ENCODE measurements at regions of chr14 and their contacts with region 1.

Region 1: GRCh38 chr14:89973234-89973823 is 17.6 kb downstream of the TDP1 start:
- DNase-seq: peak; percentile 71 to 74
- ATAC-seq: peak; percentile 98 to 99
- H3K4me3 ChIP-seq: no peak overlapping the region
- H3K27ac ChIP-seq: no peak overlapping the region
- H3K4me1 ChIP-seq: no peaks in the 10 kb centered on the region
- CTCF ChIP-seq: peak; percentile 81
- EP300 ChIP-seq: no peak
- POLR2A ChIP-seq: no peak
- RAD21 ChIP-seq: peak; percentile 64 to 68

Region 2: GRCh38 chr14:89794096-89794495 is 179.2 kb before region 1 on chr14:
- CTCF ChIA-PET with region 1: no interaction called
- POLR2A ChIA-PET with region 1: no interaction called
- DNase-seq: no peak
- ATAC-seq: no peak
- H3K4me3 ChIP-seq: no peak overlapping the region
- H3K27ac ChIP-seq: no peak overlapping the region
- H3K4me1 ChIP-seq: no peaks in the 10 kb centered on the region
- CTCF ChIP-seq: no peak
- EP300 ChIP-seq: no peak
- POLR2A ChIP-seq: no peak
- RAD21 ChIP-seq: no peak

Region 3: GRCh38 chr14:89954070-89955028 is 19.0 kb before region 1 on chr14 and contains the start of gene EFCAB11:
- CTCF ChIA-PET with region 1: interaction called, 83 read pairs
- POLR2A ChIA-PET with region 1: no interaction called
- DNase-seq: peak; percentile 83 to 97
- ATAC-seq: peak; percentile 80 to 91
- H3K4me3 ChIP-seq: peak within 1 kb of the TSS; percentile 89
- H3K27ac ChIP-seq: peak within 1 kb of the TSS; percentile 88 to 93
- H3K4me1 ChIP-seq: peaks cover 14% of the 10 kb centered on the region
- CTCF ChIP-seq: 0 out of 3 replicates have a peak, but pooled peaks have one; percentile 9
- EP300 ChIP-seq: no peak
- POLR2A ChIP-seq: peak; percentile 56
- RAD21 ChIP-seq: no peak
- polyA plus RNA-seq, gene EFCAB11: 10.8 and 18.8 TPM in 2 replicates

Region 4: GRCh38 chr14:89992273-89992672 is 18.9 kb after region 1 on chr14:
- CTCF ChIA-PET with region 1: interaction called, 92 read pairs
- POLR2A ChIA-PET with region 1: no interaction called
- DNase-seq: no peak
- ATAC-seq: no peak
- H3K4me3 ChIP-seq: no peak overlapping the region
- H3K27ac ChIP-seq: no peak overlapping the region
- H3K4me1 ChIP-seq: no peaks in the 10 kb centered on the region
- CTCF ChIP-seq: no peak
- EP300 ChIP-seq: no peak
- POLR2A ChIP-seq: no peak
- RAD21 ChIP-seq: no peak

Region 5: GRCh38 chr14:90053044-90053443 is 79.7 kb after region 1 on chr14:
- CTCF ChIA-PET with region 1: interaction called, 11 read pairs
- POLR2A ChIA-PET with region 1: no interaction called
- DNase-seq: no peak
- ATAC-seq: no peak
- H3K4me3 ChIP-seq: no peak overlapping the region
- H3K27ac ChIP-seq: no peak overlapping the region
- H3K4me1 ChIP-seq: 0 out of 3 replicates have a peak, but pooled peaks cover 5% of the 10 kb centered on the region
- CTCF ChIP-seq: no peak
- EP300 ChIP-seq: no peak
- POLR2A ChIP-seq: no peak
- RAD21 ChIP-seq: no peak

Region 6: GRCh38 chr14:90235179-90235976 is 262.0 kb after region 1 on chr14:
- CTCF ChIA-PET with region 1: interaction called, 188 read pairs
- POLR2A ChIA-PET with region 1: no interaction called
- DNase-seq: peak; percentile 65 to 76
- ATAC-seq: peak; percentile 89 to 95
- H3K4me3 ChIP-seq: no peak overlapping the region
- H3K27ac ChIP-seq: no peak overlapping the region
- H3K4me1 ChIP-seq: no peaks in the 10 kb centered on the region
- CTCF ChIP-seq: peak; percentile 83
- EP300 ChIP-seq: no peak
- POLR2A ChIP-seq: no peak
- RAD21 ChIP-seq: peak; percentile 83 to 89

Measured in A549 (cell line).